MCF 10A (cell line): ENCODE measurements at regions of chr14 and their contacts with region 1.

Region 1: DNA sequence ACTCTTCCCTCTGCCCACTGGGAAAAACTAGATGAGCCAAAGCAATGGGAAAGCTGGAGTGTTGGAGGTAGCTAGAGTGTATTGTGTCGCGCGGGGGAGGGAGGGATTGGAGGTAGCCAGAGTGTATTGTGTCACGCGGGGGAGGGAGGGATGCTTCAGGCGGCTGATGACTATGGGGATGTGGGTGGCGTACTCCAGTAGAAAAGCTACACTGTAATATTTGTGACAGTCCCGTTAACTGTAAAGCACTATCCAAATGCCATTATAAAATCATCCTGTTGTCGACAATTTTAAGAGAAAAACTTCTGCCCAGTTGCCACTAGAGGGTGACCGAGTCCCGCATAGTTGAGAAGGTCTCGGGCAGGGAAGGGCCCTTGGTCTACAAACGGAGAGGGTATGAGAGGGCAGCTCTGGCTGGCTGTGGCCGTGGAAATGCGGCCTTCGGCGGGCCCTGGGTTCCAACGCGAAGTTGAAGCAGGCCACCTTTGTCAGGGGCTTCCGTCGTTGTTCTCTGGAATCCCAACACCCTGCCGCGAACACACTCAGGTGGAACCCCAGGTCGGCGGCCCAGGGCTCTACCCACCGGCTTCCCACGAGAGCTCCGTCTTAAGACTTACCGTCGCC is 15.1 kb upstream of the PLEK2 start:
- DNase-seq: peak; percentile 80
- H3K4me3 Mint-ChIP-seq: no peak overlapping the region
- H3K27ac Mint-ChIP-seq: no peak overlapping the region
- H3K4me1 Mint-ChIP-seq: peaks cover 17% of the 10 kb centered on the region
- H3K27me3 Mint-ChIP-seq: no peaks in the 10 kb centered on the region
- CTCF ChIP-seq: peak; percentile 64

Region 2: DNA sequence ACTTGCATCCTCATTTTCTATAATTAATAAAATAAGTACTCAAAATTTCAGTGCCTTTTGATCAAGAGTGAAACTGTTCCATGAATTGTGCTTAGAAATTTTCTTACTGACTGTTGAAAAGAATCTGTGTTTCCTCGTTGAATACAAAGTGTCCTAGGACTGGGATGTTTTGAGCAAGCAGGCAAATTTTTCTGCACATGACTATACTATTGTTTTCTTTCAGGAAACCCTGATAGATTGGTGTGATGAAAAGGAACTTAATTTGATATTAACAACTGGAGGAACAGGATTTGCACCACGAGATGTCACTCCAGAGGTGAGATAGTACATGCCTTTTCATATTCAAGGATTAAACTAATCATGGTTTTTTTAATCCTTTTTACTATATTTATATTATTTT is 602.8 kb before region 1 on chr14:
- CTCF ChIA-PET with region 1: no interaction called
- POLR2A ChIA-PET with region 1: no interaction called
- intact Hi-C with region 1: no loop called
- DNase-seq: no peak
- H3K4me3 Mint-ChIP-seq: no peak overlapping the region
- H3K27ac Mint-ChIP-seq: no peak overlapping the region
- H3K4me1 Mint-ChIP-seq: no peaks in the 10 kb centered on the region
- H3K27me3 Mint-ChIP-seq: no peaks in the 10 kb centered on the region
- CTCF ChIP-seq: no peak

Region 3: DNA sequence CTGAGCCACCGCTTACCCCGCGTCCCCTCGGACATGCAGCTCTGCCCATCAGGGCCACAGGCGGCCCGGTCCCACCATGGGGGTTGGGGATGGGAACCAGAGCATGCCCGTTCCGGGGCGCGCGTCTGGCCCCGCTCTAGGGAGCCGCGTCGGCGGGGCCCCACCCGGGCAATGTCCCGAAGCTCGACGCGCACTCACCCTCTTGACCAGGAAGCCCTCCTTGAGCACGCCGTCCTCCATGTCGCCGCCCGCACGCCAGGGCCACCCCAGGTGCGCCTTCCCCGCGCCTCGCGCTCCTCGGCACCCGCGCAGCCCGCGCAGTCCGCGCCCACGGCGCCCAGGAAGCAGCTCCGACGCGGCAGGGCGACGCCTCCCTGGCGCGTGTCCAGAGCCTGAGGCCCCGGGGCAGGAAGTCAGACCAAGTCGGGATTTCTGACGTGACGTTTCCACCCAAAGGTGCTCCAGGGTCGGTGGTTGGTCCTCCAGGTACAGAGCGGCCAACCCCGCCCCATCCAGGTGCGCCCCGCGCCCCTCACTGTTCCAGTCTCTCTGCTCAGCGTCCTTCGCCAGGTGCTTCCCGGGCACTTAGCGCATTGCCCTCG is 15.2 kb before region 1 on chr14 and contains the start of gene PLEK2:
- CTCF ChIA-PET with region 1: interaction called, 19 read pairs
- POLR2A ChIA-PET with region 1: interaction called, 3 read pairs
- intact Hi-C with region 1: no loop called
- DNase-seq: peak; percentile 81
- H3K4me3 Mint-ChIP-seq: peak within 1 kb of the TSS; percentile 84
- H3K27ac Mint-ChIP-seq: peak within 1 kb of the TSS; percentile 63
- H3K4me1 Mint-ChIP-seq: peaks cover 24% of the 10 kb centered on the region
- H3K27me3 Mint-ChIP-seq: no peaks in the 10 kb centered on the region
- CTCF ChIP-seq: no peak
- total RNA-seq, gene PLEK2: 22.4 and 39.9 TPM in 2 replicates

Region 4: GRCh38 chr14:67467179-67468080 is 40.3 kb after region 1 on chr14:
- CTCF ChIA-PET with region 1: interaction called, 10 read pairs
- POLR2A ChIA-PET with region 1: no interaction called
- intact Hi-C with region 1: no loop called
- DNase-seq: no peak
- H3K4me3 Mint-ChIP-seq: no peak overlapping the region
- H3K27ac Mint-ChIP-seq: no peak overlapping the region
- H3K4me1 Mint-ChIP-seq: no peaks in the 10 kb centered on the region
- H3K27me3 Mint-ChIP-seq: peaks cover 24% of the 10 kb centered on the region
- CTCF ChIP-seq: no peak

Region 5: DNA sequence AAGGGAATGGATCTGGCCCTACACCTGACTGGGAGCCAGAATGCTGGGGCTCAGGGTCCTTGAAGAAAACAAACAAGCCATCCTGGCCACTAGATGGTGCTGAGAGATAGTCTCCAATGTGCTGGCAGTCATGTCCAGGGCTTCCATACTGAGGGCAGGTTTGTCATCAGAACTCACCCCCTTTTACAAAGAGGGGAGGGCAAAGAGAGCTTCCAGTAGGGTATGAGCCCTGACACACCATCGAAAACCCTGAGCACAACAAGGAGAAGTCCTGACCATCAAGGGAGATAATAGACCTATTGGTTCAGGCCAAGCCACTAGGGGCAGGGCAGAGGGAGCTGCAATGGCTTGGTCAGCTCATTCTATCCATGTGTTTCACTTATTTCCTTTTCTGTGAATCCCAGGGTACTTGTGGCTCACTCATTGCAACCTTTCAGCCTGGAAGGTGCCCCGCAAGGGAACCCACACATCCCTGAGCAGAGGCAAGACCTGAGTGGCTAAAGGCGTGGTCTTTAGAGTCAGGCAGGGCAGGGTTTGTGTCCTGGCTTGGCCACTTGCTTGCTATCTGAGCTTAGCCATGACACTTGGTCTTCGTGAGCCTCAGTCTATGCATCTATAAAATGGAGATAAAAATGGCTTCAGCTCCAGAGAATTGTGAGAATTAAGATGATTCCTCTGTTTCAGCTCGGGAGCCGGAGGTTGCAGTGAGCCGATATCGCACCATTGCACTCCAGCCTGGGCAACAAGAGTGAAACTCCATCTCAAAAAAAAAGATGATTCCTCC is 99.8 kb after region 1 on chr14:
- CTCF ChIA-PET with region 1: interaction called, 66 read pairs
- POLR2A ChIA-PET with region 1: no interaction called
- intact Hi-C with region 1: loop called (anchors 5 kb)
- DNase-seq: peak; percentile 69
- H3K4me3 Mint-ChIP-seq: no peak overlapping the region
- H3K27ac Mint-ChIP-seq: no peak overlapping the region
- H3K4me1 Mint-ChIP-seq: no peaks in the 10 kb centered on the region
- H3K27me3 Mint-ChIP-seq: peaks cover 37% of the 10 kb centered on the region
- CTCF ChIP-seq: peak; percentile 65

Region 6: DNA sequence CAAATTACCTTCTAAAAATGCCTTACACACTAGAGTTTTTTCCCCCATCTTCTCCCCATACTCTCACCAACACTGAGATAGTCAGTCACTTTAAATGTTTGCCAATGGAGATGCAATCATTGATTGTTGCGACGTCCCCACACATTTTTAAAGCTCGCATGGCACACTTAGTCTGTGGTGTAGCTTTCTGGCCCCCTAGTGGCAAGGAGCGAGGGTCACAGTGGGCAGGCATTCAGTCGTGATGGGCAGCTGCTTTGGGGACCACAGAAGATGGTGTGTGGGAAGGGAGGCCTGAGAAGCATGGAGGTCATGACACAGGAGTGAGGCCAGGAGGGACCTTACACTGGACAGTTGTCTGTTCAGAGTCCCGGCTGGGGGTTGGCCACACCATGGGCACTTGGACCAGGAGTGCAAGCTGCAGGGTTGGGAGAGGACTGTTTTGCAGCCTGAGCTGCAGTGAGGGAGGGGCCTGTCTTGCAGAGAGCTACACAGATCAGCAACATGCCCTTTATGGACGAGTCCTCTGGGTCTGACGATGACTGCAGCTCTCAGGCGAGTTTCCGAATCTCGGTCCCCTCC is 144.3 kb after region 1 on chr14:
- CTCF ChIA-PET with region 1: interaction called, 221 read pairs
- POLR2A ChIA-PET with region 1: interaction called, 10 read pairs
- intact Hi-C with region 1: loop called (anchors 1 kb)
- DNase-seq: peak; percentile 69
- H3K4me3 Mint-ChIP-seq: no peak overlapping the region
- H3K27ac Mint-ChIP-seq: no peak overlapping the region
- H3K4me1 Mint-ChIP-seq: peaks cover 12% of the 10 kb centered on the region
- H3K27me3 Mint-ChIP-seq: no peaks in the 10 kb centered on the region
- CTCF ChIP-seq: peak; percentile 85

Region 7: GRCh38 chr14:67599698-67600561 is 172.8 kb after region 1 on chr14 and contains the start of gene PIGH:
- CTCF ChIA-PET with region 1: interaction called, 13 read pairs
- POLR2A ChIA-PET with region 1: interaction called, 4 read pairs
- intact Hi-C with region 1: no loop called
- DNase-seq: peak; percentile 81
- H3K4me3 Mint-ChIP-seq: peak within 1 kb of the TSS; percentile 96
- H3K27ac Mint-ChIP-seq: peak within 1 kb of the TSS; percentile 79
- H3K4me1 Mint-ChIP-seq: peaks cover 13% of the 10 kb centered on the region
- H3K27me3 Mint-ChIP-seq: no peaks in the 10 kb centered on the region
- CTCF ChIP-seq: peak; percentile 60
- total RNA-seq, gene PIGH: 13.8 and 18.9 TPM in 2 replicates

Region 8: DNA sequence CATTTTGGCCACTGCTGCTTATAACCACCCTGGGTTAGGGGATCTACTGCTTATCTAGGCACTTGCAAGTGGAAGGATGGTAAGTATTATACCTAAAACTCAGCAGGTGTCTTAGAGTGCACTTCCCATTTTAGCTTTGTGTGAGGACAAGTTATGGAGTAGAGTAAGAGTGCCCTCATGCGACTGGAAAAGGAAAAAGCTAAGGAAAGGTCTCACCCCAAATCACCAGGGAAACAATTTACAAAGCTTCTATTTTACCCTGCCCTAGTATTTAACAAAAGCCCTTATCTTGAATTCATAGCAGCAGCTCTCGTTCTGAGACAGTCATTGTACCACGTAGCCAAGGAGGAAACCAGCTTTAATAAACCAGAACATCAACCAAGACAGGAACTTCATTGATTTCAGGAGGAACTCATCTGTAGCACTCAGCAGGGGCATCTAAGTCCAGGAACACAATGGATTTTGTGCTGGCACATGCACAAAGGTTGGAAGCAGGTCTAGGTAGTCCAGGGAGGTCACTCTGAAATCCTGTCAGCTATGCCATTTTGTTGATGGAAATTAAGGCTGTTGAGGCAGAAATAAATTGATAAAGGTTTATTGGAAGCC is 277.5 kb after region 1 on chr14:
- CTCF ChIA-PET with region 1: interaction called, 51 read pairs
- POLR2A ChIA-PET with region 1: interaction called, 4 read pairs
- intact Hi-C with region 1: loop called (anchors 1 kb)
- DNase-seq: peak; percentile 70
- H3K4me3 Mint-ChIP-seq: no peak overlapping the region
- H3K27ac Mint-ChIP-seq: no peak overlapping the region
- H3K4me1 Mint-ChIP-seq: peaks cover 9% of the 10 kb centered on the region
- H3K27me3 Mint-ChIP-seq: no peaks in the 10 kb centered on the region
- CTCF ChIP-seq: peak; percentile 75